PC-3 (cell line): ENCODE measurements at regions of chr13 and their contacts with region 1.

Region 1: DNA sequence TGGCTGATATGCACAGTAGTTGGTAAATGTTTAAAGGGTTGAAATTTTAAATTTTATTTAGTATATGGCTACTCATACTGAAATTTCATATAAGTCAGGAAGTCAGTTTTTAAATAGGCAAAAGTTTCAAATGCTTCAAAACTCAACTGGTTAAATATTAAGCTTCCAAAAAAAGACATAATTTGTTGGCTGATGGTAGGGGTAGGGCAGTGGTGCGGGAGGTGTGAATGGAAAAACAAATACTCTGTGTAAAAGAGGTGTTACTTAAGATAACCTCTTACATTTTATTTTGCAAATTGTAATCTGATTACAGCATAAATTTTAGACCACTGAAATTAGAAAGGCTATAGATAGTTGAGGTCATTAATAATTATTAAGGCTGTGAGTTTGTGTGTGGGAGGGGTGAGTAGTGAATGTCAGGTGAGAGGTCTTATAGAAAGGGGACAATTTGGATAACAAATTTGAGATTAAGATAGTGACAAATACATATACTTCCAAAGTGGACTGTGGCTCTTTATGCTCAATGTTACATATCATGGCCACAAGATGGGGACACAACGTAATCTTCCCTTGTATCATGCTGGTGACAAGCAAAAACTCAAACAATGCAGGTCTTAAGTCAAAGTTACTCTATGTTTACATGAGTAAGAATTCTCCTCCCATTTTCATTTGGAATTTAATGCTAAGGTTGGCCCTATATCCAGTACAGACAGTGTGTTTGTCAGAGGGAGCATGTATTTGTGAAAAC is 36.6 kb upstream of the OXGR1 start:
- DNase-seq: peak; percentile 60
- ATAC-seq: peak; percentile 68
- H3K4me3 ChIP-seq: no peak overlapping the region
- H3K27ac ChIP-seq: no peak overlapping the region
- H3K4me1 ChIP-seq: no peaks in the 10 kb centered on the region; the same call in 1 of the 2 replicates
- H3K27me3 ChIP-seq: no peaks in the 10 kb centered on the region
- CTCF ChIP-seq: peak; percentile 58

Region 2: GRCh38 chr13:96730676-96731075 is 300.2 kb before region 1 on chr13:
- CTCF ChIA-PET with region 1: no interaction called
- POLR2A ChIA-PET with region 1: no interaction called
- intact Hi-C with region 1: no loop called
- DNase-seq: no peak
- ATAC-seq: no peak
- H3K4me3 ChIP-seq: no peak overlapping the region
- H3K27ac ChIP-seq: no peak overlapping the region
- H3K4me1 ChIP-seq: no peaks in the 10 kb centered on the region
- H3K27me3 ChIP-seq: no peaks in the 10 kb centered on the region
- CTCF ChIP-seq: no peak

Region 3: DNA sequence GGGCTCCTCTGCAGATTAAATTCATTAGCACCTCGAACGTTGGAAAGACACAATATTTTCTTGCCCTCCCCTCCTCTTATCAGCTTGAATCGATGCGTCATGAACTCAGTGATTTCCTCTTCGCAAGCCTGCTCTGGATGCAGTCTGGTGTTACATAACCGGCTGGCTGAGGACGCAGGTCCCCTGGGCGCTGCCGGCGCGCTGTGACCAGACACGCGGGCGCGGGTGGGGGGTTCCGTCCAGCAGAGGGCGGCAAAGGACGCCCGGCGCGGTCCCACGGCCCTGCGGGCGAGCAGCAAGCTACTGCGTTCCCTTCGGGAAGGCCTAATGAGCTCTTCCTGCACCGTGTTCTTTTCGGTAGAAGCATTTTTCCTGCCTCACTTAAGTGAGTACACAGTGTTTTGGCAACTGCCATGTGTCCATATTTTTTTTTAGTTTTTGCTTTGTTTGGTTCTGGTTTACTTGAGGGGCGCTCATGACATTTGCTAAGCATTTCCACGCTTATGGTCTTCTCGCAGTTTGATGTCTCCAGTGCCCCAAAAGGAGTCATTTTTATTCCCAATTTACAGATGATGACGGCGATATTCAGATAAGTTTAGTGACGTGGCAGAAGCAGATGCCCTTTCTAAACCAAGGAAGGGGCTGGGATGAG is 79.1 kb after region 1 on chr13:
- CTCF ChIA-PET with region 1: no interaction called
- POLR2A ChIA-PET with region 1: no interaction called
- intact Hi-C with region 1: loop called (anchors 10 kb)
- DNase-seq: peak; percentile 82
- ATAC-seq: peak; percentile 94
- H3K4me3 ChIP-seq: no peak overlapping the region
- H3K27ac ChIP-seq: no peak overlapping the region
- H3K4me1 ChIP-seq: peaks cover 12% of the 10 kb centered on the region
- H3K27me3 ChIP-seq: no peaks in the 10 kb centered on the region
- CTCF ChIP-seq: peak; percentile 88